ENCODE measurements at regions of chr9 and their contacts with region 1.

Region 1: GRCh38 chr9:96441798-96442445 is 8.0 kb upstream of the HABP4 start:
- DNase-seq: no peak
- ATAC-seq: peak; percentile 80 to 92
- H3K4me3 ChIP-seq: no peak overlapping the region
- H3K27ac ChIP-seq: no peak overlapping the region
- H3K4me1 ChIP-seq: peaks cover 0 to 4% of the 10 kb centered on the region in 2 donors
- H3K27me3 ChIP-seq: no peaks in the 10 kb centered on the region
- CTCF ChIP-seq: peak; percentile 55 to 80 (median 74)
- POLR2A ChIP-seq: no peak

Region 2: GRCh38 chr9:96418074-96418809 is 23.7 kb before region 1 on chr9 and contains the start of gene ZNF367:
- in situ Hi-C with region 1: no loop called
- intact Hi-C with region 1: no loop called
- DNase-seq: peak; percentile 96 to 98
- ATAC-seq: peak; percentile 77 to 82
- H3K4me3 ChIP-seq: peak within 1 kb of the TSS; percentile 71 to 89 (median 84)
- H3K27ac ChIP-seq: peak within 1 kb of the TSS; percentile 99
- H3K4me1 ChIP-seq: peaks cover 21 to 26% of the 10 kb centered on the region in 2 donors
- H3K27me3 ChIP-seq: no peaks in the 10 kb centered on the region
- CTCF ChIP-seq: no peak
- POLR2A ChIP-seq: peak in 1 of 2 donors; percentile 8
- total RNA-seq, gene ZNF367: 0.15 to 5.1 (median 1.7) TPM

Region 3: GRCh38 chr9:96478829-96479371 is 37.0 kb after region 1 on chr9:
- in situ Hi-C with region 1: no loop called
- intact Hi-C with region 1: no loop called
- DNase-seq: no peak
- ATAC-seq: no peak
- H3K4me3 ChIP-seq: no peak overlapping the region
- H3K27ac ChIP-seq: no peak overlapping the region
- H3K4me1 ChIP-seq: no peaks in the 10 kb centered on the region
- H3K27me3 ChIP-seq: no peaks in the 10 kb centered on the region
- CTCF ChIP-seq: no peak
- POLR2A ChIP-seq: no peak

Region 4: DNA sequence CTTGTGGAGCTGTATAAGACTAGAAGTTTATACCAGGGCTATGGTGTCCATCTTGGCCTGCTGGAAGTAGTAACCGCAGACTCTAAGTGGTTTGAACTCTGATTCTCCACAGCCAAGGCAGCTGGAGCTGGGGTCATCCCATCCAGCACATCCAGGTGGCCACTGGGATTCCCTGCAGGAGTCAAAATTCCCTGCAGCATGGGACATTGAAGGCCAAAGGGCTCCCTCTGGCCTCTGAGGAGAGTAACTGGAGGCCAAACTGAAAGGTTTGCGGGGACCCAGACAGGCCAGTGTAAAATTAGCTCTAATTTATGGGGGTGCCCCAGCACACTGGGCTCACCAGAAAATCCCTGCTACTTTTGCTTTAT is 225.4 kb after region 1 on chr9:
- in situ Hi-C with region 1: loop called (anchors 5 to 10 kb)
- intact Hi-C with region 1: loop called (anchors 1 kb)
- DNase-seq: no peak
- ATAC-seq: no peak
- H3K4me3 ChIP-seq: no peak overlapping the region
- H3K27ac ChIP-seq: no peak overlapping the region
- H3K4me1 ChIP-seq: no peaks in the 10 kb centered on the region
- H3K27me3 ChIP-seq: no peaks in the 10 kb centered on the region
- CTCF ChIP-seq: no peak
- POLR2A ChIP-seq: no peak

Measured in gastrocnemius medialis (tissue), 4 donors.